GM10248 (cell line): ENCODE measurements at regions of chr22 and their contacts with region 1.

Region 1: DNA sequence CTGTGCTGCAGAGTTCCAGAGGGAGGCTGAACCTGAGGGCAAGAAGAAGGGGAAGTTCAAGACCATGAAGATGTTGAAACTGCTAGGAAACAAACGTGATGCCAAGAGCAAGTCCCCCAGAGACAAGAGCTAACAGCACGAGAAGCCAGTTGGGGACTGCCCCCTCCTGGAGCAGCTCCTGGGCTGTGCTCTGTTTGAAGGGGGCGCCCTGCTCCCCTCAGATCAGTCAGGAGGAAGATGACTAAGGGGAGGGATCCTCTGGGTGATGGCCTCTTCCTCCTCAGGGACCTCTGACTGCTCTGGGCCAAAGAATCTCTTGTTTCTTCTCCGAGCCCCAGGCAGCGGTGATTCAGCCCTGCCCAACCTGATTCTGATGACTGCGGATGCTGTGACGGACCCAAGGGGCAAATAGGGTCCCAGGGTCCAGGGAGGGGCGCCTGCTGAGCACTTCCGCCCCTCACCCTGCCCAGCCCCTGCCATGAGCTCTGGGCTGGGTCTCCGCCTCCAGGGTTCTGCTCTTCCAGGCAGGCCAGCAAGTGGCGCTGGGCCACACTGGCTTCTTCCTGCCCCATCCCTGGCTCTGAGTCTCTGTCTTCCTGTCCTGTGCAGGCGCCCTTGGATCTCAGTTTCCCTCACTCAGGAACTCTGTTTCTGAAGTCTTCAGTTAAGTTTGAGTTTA is 12.6 kb downstream of the C22orf23 start:
- DNase-seq: no peak
- CTCF ChIP-seq: no peak

Region 2: DNA sequence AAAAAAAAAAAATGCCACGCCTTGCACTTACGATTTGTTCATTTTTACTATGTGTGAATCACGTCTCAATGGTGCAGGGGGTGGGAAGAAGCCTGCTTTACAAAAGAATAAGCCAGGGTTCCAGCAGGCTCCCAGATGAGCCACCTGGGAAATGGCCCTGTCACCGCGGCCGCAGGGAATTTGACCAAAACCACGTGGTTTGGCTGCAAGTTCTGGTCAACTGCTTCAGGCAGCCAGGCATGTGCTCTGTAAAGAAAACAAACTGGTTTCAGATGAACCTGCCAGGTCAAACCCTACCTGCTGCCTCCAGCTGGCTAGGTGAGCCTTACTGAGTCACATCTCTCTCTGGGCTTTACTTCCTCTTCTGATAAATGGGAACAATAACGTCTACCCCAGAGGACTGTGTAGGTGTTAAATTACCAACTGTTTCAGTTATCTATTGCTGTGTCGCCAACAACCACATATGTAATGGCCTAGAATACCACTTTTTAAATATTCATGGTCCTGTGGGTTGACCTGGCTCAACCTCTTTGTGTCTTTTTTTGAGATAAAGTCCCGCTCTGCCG is 163.6 kb before region 1 on chr22:
- CTCF ChIA-PET with region 1: no interaction called
- POLR2A ChIA-PET with region 1: no interaction called
- DNase-seq: peak; percentile 75
- CTCF ChIP-seq: no peak

Region 3: GRCh38 chr22:37920126-37920525 is 20.7 kb before region 1 on chr22:
- CTCF ChIA-PET with region 1: no interaction called
- POLR2A ChIA-PET with region 1: no interaction called
- DNase-seq: no peak
- CTCF ChIP-seq: no peak

Region 4: GRCh38 chr22:37953437-37954179 is 12.8 kb after region 1 on chr22 and contains the starts of genes C22orf23 and POLR2F:
- CTCF ChIA-PET with region 1: interaction called, 10 read pairs
- POLR2A ChIA-PET with region 1: interaction called, 5 read pairs
- DNase-seq: peak; percentile 100
- CTCF ChIP-seq: no peak

Region 5: DNA sequence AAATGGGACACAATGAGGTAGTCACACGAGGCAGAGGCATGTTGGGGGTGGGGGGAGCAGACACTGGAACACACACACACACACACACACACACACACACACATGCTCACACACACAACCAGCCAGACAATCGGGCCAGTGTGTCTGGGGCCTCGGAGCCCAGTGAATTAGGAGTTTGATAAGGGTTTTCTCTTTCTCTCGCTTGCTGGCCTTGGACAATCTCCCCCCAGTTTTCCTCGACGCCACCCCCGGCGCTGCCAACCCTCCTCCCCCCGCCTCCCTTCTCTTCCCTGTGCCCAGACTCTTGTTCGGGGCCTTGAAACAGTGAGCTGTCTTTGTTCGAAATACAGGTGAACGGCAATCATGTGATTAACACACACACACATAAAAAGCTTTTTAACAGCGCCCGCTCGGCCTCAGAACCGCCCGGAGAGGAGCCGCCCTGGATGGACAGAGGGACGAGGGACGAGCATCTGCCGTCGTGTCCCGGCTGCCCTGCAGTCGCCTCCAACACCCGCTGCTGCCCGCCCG is 45.0 kb after region 1 on chr22:
- CTCF ChIA-PET with region 1: no interaction called
- POLR2A ChIA-PET with region 1: no interaction called
- DNase-seq: no peak
- CTCF ChIP-seq: no peak